ENCODE measurements at regions of chr7 and their contacts with region 1.

Region 1: GRCh38 chr7:150481186-150481920 is 30.9 kb downstream of the GIMAP8 start:
- DNase-seq: peak; percentile 90
- H3K4me3 Mint-ChIP-seq: peak overlapping the region; percentile 86
- H3K27ac Mint-ChIP-seq: peak overlapping the region; percentile 100
- H3K4me1 Mint-ChIP-seq: peaks cover 87% of the 10 kb centered on the region
- H3K27me3 Mint-ChIP-seq: no peaks in the 10 kb centered on the region

Region 2: DNA sequence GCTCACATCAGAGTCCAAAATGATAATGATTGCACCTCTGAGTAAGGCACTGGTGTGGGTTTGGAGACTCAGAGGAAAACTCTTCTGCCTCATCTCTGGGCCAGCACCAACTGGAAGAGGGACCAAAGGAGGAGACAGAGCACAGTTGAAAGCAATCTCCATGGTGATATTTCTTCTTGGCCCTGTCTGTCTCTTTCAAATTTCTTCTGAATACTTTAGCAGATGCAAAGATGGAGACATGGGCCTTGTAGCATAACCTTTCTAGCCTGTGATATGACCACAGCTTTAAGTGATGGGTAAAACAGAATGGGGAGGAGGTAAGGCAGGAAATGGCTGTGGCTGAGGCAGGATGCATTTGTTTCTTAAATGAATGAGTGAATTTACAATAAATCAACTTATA is 21.2 kb after region 1 on chr7:
- intact Hi-C with region 1: loop called (anchors 1 kb)
- DNase-seq: peak; percentile 85
- H3K4me3 Mint-ChIP-seq: peak overlapping the region; percentile 58
- H3K27ac Mint-ChIP-seq: peak overlapping the region; percentile 93
- H3K4me1 Mint-ChIP-seq: peaks cover 66% of the 10 kb centered on the region
- H3K27me3 Mint-ChIP-seq: no peaks in the 10 kb centered on the region

Measured in activated CD4-positive, alpha-beta T cell treated with anti-CD3 and anti-CD28 coated beads, Interleukin-2, amount 10 ng/mL, durations not matched to agents 24 days and 14 days (primary cell).